CD8-positive, alpha-beta T cell (primary cell): ENCODE measurements at regions of chr6 and their contacts with region 1.

Region 1: DNA sequence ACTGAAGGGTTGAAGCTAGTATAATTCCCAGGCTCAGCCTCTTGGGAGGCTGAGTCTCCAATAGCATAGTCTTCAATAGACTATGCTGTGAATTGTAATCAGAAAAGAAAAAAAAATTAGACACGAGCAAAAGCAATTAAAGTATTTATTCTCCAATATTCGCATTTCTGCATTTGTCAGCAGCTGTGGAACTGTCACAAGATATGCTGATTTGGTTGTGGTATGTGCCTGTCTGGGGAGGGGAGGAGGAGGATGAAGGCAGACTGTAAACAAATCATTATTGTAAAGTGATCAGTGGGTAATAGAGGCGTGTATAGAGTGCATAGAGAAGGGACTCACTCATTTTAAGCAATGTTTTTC is 10.1 kb upstream of the BICRAL start:
- DNase-seq: peak in 5 of 9 experiments; percentile 34 to 83 (median 57)
- ATAC-seq: peak; percentile 21
- H3K4me3 ChIP-seq: peak overlapping the region; percentile 22 to 24
- H3K4me3 Mint-ChIP-seq: peak overlapping the region; percentile 70
- H3K27ac ChIP-seq: peak overlapping the region; percentile 81 to 98
- H3K27ac Mint-ChIP-seq: peak overlapping the region; percentile 100
- H3K4me1 ChIP-seq: peaks cover 67% of the 10 kb centered on the region
- H3K4me1 Mint-ChIP-seq: peaks cover 72% of the 10 kb centered on the region
- H3K27me3 ChIP-seq: no peaks in the 10 kb centered on the region
- H3K27me3 Mint-ChIP-seq: no peaks in the 10 kb centered on the region
- CTCF ChIP-seq: no peak

Region 2: GRCh38 chr6:42782622-42783176 is 11.0 kb after region 1 on chr6:
- CTCF ChIA-PET with region 1: interaction called, 24 read pairs
- POLR2A ChIA-PET with region 1: interaction called, 327 read pairs
- intact Hi-C with region 1: loop called (anchors 1 kb)
- DNase-seq: peak; percentile 62 to 90 (median 78)
- ATAC-seq: peak; percentile 53
- H3K4me3 ChIP-seq: peak overlapping the region; percentile 74 to 98
- H3K4me3 Mint-ChIP-seq: peak overlapping the region; percentile 96
- H3K27ac ChIP-seq: peak overlapping the region; percentile 100
- H3K27ac Mint-ChIP-seq: peak overlapping the region; percentile 100
- H3K4me1 ChIP-seq: peaks cover 46% of the 10 kb centered on the region
- H3K4me1 Mint-ChIP-seq: peaks cover 26% of the 10 kb centered on the region
- H3K27me3 ChIP-seq: no peaks in the 10 kb centered on the region
- H3K27me3 Mint-ChIP-seq: no peaks in the 10 kb centered on the region
- CTCF ChIP-seq: no peak

Region 3: GRCh38 chr6:42790549-42791181 is 18.9 kb after region 1 on chr6:
- CTCF ChIA-PET with region 1: interaction called, 4 read pairs
- POLR2A ChIA-PET with region 1: interaction called, 327 read pairs
- intact Hi-C with region 1: no loop called
- DNase-seq: peak in 1 of 9 experiments; percentile 45
- ATAC-seq: no peak
- H3K4me3 ChIP-seq: no peak overlapping the region
- H3K4me3 Mint-ChIP-seq: peak overlapping the region; percentile 4
- H3K27ac ChIP-seq: peak overlapping the region; percentile 10 to 51
- H3K27ac Mint-ChIP-seq: peak overlapping the region; percentile 83
- H3K4me1 ChIP-seq: peaks cover 54% of the 10 kb centered on the region
- H3K4me1 Mint-ChIP-seq: peaks cover 39% of the 10 kb centered on the region
- H3K27me3 ChIP-seq: no peaks in the 10 kb centered on the region
- H3K27me3 Mint-ChIP-seq: no peaks in the 10 kb centered on the region
- CTCF ChIP-seq: no peak

Region 4: DNA sequence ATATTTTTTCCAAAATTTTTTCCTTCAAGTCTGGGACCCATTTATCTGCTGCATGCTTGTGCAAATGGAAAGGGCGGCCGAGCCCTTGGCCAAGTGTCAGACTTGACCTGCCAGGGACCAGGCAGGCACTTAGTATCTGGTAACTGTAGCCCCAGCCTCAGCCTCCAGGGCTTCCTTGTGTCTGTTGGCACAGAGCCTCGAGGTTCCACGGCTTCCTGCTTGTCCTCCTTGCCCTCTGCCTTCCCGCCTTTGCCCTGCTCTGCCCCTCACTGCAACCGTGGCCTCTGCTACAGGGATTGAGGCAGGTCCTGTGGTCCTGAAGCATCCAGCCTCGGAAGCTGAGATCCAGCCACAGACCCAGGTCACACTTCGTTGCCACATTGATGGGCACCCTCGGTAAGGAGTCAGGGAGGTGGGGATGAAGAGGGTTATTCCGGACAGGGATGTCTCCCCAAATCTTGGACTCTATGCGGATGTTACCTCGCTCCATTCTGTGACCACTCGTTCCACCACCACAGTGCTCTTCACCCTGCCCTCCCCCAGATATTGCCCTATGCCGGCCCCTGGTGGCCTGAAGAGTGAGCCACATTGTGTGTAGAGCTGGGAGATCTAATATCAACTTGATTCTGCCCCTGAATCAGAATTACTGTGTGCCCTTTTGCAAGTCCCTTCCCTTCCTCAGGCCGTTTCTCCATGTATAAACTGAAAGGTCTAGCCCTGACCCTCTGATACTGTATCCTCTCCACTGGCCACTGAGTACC is 357.9 kb after region 1 on chr6:
- CTCF ChIA-PET with region 1: no interaction called
- POLR2A ChIA-PET with region 1: no interaction called
- intact Hi-C with region 1: no loop called
- DNase-seq: peak in 1 of 9 experiments; percentile 34
- ATAC-seq: no peak
- H3K4me3 ChIP-seq: no peak overlapping the region
- H3K4me3 Mint-ChIP-seq: no peak overlapping the region
- H3K27ac ChIP-seq: no peak overlapping the region
- H3K27ac Mint-ChIP-seq: no peak overlapping the region
- H3K4me1 ChIP-seq: no peaks in the 10 kb centered on the region
- H3K4me1 Mint-ChIP-seq: no peaks in the 10 kb centered on the region
- H3K27me3 ChIP-seq: no peaks in the 10 kb centered on the region
- H3K27me3 Mint-ChIP-seq: no peaks in the 10 kb centered on the region
- CTCF ChIP-seq: no peak